Naive thymus-derived CD8-positive, alpha-beta T cell (primary cell): ENCODE measurements at regions of chr1 and their contacts with region 1.

Region 1: GRCh38 chr1:229614701-229615100 is 11.2 kb downstream of the TAF5L start:
- DNase-seq: no peak
- ATAC-seq: no peak
- H3K4me3 Mint-ChIP-seq: no peak overlapping the region
- H3K27ac Mint-ChIP-seq: peak overlapping the region in 1 of 10 donors; percentile 28
- H3K4me1 Mint-ChIP-seq: peaks cover 13 to 27% (median 16%) of the 10 kb centered on the region in 4 donors
- H3K27me3 Mint-ChIP-seq: no peaks in the 10 kb centered on the region

Region 2: DNA sequence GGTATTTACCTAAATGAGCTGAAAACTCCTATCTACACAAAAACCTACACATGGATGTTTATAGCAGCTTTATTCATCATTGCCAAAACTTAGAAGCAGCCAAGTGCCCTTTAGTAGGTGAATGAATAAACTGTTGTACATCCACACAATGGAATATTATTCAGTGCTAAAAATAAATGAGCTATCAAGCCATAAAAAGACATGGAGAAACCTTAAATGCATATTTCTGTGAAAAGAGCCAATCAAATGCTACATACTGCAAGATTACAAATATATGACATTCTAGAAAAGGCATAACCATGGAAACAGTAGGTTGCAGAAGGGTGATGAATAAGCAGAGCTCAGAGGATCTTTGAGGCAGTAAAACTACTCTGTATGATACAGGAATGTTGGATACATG is 79.5 kb before region 1 on chr1:
- POLR2A ChIA-PET with region 1: interaction called, 10 read pairs
- DNase-seq: no peak
- ATAC-seq: no peak
- H3K4me3 Mint-ChIP-seq: no peak overlapping the region
- H3K27ac Mint-ChIP-seq: no peak overlapping the region
- H3K4me1 Mint-ChIP-seq: no peaks in the 10 kb centered on the region
- H3K27me3 Mint-ChIP-seq: no peaks in the 10 kb centered on the region